ENCODE measurements at regions of chr6 and their contacts with region 1.

Region 1: DNA sequence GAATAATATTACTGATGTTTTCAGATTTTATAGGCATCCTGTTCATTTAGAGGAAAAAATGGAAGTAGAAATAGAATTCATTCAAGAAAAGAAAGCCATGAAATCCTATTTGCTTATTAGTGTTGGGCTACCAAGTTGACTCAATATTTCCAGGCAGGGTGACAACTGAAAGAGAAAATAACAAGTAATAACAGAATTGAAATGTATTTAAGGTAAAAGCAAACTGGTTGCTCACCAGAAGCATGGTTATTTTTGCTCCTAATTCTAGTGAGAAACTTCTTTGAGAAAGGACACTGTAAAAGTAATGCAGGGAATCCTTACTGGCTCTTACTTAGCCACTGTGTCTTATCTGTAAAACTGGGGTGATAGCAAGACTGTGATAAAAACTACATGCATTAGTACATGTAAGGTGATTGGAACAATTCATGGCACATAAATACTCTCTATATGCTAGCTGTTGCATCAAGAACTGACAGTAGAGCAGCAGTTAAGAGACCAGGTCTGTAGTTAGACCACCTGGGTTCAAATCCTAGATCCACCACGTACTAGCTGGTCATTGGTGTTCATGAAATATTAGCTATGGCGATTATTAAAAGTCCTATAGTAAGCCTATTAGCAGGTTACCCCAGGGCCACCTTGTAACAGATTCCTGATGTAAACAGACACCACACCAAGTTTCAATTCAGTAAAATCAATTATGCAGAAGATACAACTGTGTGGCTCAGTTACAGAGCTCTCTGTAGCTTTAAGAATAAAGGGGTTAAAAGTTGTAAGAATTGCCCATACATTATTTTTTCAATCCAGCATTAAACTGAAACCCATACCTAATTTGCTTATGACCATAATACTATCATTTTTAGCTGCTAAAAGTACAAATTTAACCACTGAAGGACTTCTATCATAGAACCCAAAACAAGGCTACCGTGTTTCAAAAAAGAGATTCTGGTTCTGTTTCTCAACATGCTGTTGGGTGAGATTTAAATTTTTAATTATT is 159.2 kb upstream of the COL21A1 start:
- DNase-seq: no peak
- ATAC-seq: no peak
- H3K4me3 ChIP-seq: no peak overlapping the region
- H3K27ac ChIP-seq: no peak overlapping the region
- H3K4me1 ChIP-seq: peaks cover 0 to 31% (median 5%) of the 10 kb centered on the region in 12 donors
- H3K27me3 ChIP-seq: no peaks in the 10 kb centered on the region
- CTCF ChIP-seq: no peak
- POLR2A ChIP-seq: no peak

Region 2: DNA sequence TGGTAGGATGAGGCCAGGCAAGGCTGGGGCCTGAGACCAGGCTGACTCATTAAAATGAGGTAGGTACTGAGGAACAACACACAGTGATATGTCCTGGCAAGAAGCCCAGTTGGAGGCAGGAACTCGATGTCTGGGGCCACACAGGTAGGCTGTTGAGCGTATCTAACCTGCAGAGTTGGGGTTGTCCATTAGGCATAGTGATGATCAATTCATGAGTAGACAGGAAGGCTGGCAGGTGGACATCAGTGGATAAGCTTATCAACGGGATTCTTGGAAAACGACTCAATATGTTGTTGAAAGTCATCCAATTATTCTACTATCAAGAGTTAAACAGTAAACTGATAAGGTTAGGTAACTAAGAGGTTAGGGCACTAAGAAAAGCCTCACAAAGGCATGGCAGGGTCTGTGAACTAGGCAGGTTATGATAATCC is 34.0 kb after region 1 on chr6:
- intact Hi-C with region 1: loop called in 1 of 10 experiments (anchors 5 kb)
- DNase-seq: no peak
- ATAC-seq: no peak
- H3K4me3 ChIP-seq: no peak overlapping the region
- H3K27ac ChIP-seq: no peak overlapping the region
- H3K4me1 ChIP-seq: peaks cover 0 to 9% (median 2%) of the 10 kb centered on the region in 12 donors
- H3K27me3 ChIP-seq: no peaks in the 10 kb centered on the region
- CTCF ChIP-seq: no peak
- POLR2A ChIP-seq: no peak